ENCODE measurements at regions of chr1 and their contacts with region 1.

Region 1: GRCh38 chr1:40241362-40241761 is 6.4 kb upstream of the TMCO2 start:
- DNase-seq: peak; percentile 11 to 36 (median 30)
- H3K4me3 ChIP-seq: peak overlapping the region in 1 of 3 experiments; percentile 14
- H3K4me3 Mint-ChIP-seq: peak overlapping the region; percentile 35 to 61
- H3K27ac ChIP-seq: peak overlapping the region in 1 of 2 donors; percentile 69
- H3K27ac Mint-ChIP-seq: peak overlapping the region; percentile 73 to 95 (median 86)
- H3K4me1 ChIP-seq: peaks cover 21 to 32% of the 10 kb centered on the region in 2 donors
- H3K4me1 Mint-ChIP-seq: peaks cover 26% of the 10 kb centered on the region
- H3K27me3 ChIP-seq: no peaks in the 10 kb centered on the region
- H3K27me3 Mint-ChIP-seq: peaks cover 2 to 7% (median 2%) of the 10 kb centered on the region in 3 donors
- CTCF ChIP-seq: no peak

Region 2: GRCh38 chr1:40161125-40161887 is 80.1 kb before region 1 on chr1 and contains the start of gene RLF:
- intact Hi-C with region 1: loop called in 1 of 2 experiments (anchors 5 kb)
- DNase-seq: peak; percentile 92 to 96 (median 93)
- H3K4me3 ChIP-seq: peak within 1 kb of the TSS; percentile 64 to 94 (median 93)
- H3K4me3 Mint-ChIP-seq: no peak within 1 kb of the TSS
- H3K27ac ChIP-seq: peak within 1 kb of the TSS; percentile 91 to 96
- H3K27ac Mint-ChIP-seq: no peak within 1 kb of the TSS
- H3K4me1 ChIP-seq: peaks cover 21 to 30% of the 10 kb centered on the region in 2 donors
- H3K4me1 Mint-ChIP-seq: peaks cover 12% of the 10 kb centered on the region
- H3K27me3 ChIP-seq: no peaks in the 10 kb centered on the region
- H3K27me3 Mint-ChIP-seq: peaks cover 0 to 5% (median 0%) of the 10 kb centered on the region in 3 donors
- CTCF ChIP-seq: no peak
- polyA plus RNA-seq, gene RLF: 3.0 to 9.2 (median 6.2) TPM

Measured in CD14-positive monocyte (primary cell).